ENCODE measurements at regions of chr1 and their contacts with region 1.

Region 1: DNA sequence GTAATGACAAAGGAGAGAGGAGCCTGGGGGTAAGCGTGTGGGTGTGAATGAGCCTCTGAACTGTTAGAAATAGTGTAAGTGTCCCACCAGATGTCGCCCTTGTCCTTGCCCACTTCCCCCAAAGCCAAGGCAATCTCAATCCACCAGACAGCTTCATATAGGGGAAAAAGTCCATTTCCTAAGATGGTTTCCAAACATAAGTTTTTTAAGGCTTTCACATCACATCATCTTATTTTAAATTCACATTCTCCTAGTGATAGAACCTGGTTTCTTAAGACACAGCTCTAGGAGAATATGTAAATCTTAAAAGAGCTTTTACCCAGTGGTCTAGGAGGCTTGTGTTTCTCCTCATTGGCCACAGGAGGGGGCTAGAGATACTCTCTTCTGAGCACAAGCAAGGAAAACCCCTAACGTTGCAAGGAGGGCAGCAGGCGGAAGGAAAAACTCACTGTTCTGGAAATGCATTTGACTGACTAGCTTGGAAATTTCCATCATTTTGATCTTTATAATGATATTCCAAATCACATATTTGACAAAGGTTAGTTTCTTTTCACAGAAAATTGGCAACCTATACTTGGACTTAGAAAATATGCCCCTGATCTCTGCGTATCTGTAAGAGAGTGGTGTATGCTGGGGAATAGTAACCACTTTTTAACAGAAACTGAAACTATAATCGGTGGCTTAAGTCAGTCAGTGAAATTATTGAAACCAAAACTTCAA is 51.9 kb upstream of the LPAR3 start:
- DNase-seq: peak; percentile 41 to 96 (median 60)
- ATAC-seq: peak; percentile 95
- H3K4me3 ChIP-seq: peak overlapping the region; percentile 55
- H3K4me3 Mint-ChIP-seq: peak overlapping the region; percentile 89
- H3K27ac ChIP-seq: peak overlapping the region; percentile 80 to 89
- H3K27ac Mint-ChIP-seq: peak overlapping the region; percentile 98
- H3K4me1 ChIP-seq: peaks cover 12% of the 10 kb centered on the region
- H3K4me1 Mint-ChIP-seq: peaks cover 15% of the 10 kb centered on the region
- H3K27me3 ChIP-seq: no peaks in the 10 kb centered on the region
- H3K27me3 Mint-ChIP-seq: no peaks in the 10 kb centered on the region
- CTCF ChIP-seq: peak; percentile 98

Region 2: DNA sequence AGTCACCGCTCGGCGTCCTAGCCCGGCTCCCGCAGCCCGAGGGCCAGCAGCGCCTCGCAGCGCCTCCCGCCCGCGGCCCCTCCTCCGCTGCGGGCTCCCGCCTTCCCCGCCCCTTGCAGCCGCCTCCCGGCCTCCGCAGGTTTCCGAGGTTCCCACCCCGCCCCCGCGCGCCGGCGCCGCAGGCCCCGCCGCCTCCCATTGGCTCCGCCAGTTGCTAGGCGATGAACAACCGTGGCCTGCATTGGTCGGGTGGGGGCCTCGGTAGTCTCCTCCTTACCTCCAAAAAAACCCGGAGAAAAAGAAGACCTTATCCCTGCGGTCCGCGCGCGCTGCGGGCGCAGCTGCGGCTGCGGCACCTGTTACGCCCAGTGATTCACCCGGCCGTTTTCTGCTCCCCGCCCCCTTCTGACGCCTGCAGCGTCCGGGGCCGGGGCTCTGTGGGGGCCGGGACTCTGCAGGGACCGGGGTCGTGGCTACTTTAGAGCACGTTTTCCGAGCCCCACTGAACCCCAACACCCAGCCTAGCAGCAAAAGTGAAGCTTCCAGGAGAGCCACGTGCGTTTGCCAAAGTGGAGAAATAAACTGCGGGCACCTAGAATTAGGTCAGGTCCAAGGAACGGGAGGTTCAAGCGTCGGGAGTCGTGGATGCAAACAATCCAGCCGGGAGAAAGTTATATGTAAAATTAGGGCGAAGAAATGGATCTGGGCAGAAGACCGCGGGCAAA is 254.4 kb before region 1 on chr1 and contains the start of gene SSX2IP:
- CTCF ChIA-PET with region 1: interaction called, 3 read pairs
- POLR2A ChIA-PET with region 1: interaction called, 3 read pairs
- intact Hi-C with region 1: loop called in 1 of 2 experiments (anchors 2 kb)
- DNase-seq: peak; percentile 99 to 100 (median 100)
- ATAC-seq: peak; percentile 82
- H3K4me3 ChIP-seq: peak within 1 kb of the TSS; percentile 84
- H3K4me3 Mint-ChIP-seq: peak within 1 kb of the TSS; percentile 91
- H3K27ac ChIP-seq: peak within 1 kb of the TSS; percentile 76 to 83
- H3K27ac Mint-ChIP-seq: peak within 1 kb of the TSS; percentile 88
- H3K4me1 ChIP-seq: peaks cover 29% of the 10 kb centered on the region
- H3K4me1 Mint-ChIP-seq: peaks cover 77% of the 10 kb centered on the region
- H3K27me3 ChIP-seq: no peaks in the 10 kb centered on the region
- H3K27me3 Mint-ChIP-seq: no peaks in the 10 kb centered on the region
- CTCF ChIP-seq: no peak
- total RNA-seq, gene SSX2IP: 5.5 to 6.0 TPM

Region 3: GRCh38 chr1:84996846-84997666 is 52.1 kb after region 1 on chr1 and contains the start of gene MCOLN2:
- CTCF ChIA-PET with region 1: interaction called, 7 read pairs
- POLR2A ChIA-PET with region 1: interaction called, 4 read pairs
- intact Hi-C with region 1: loop called (anchors 2 to 5 kb)
- DNase-seq: peak in 13 of 14 experiments; percentile 7 to 78 (median 52)
- ATAC-seq: peak; percentile 74
- H3K4me3 ChIP-seq: peak within 1 kb of the TSS; percentile 79
- H3K4me3 Mint-ChIP-seq: peak within 1 kb of the TSS; percentile 92
- H3K27ac ChIP-seq: peak within 1 kb of the TSS in 1 of 2 donors; percentile 33
- H3K27ac Mint-ChIP-seq: peak within 1 kb of the TSS; percentile 18
- H3K4me1 ChIP-seq: peaks cover 30% of the 10 kb centered on the region
- H3K4me1 Mint-ChIP-seq: peaks cover 32% of the 10 kb centered on the region
- H3K27me3 ChIP-seq: peaks cover 8 to 36% of the 10 kb centered on the region in 2 experiments
- H3K27me3 Mint-ChIP-seq: peaks cover 55% of the 10 kb centered on the region
- CTCF ChIP-seq: no peak
- total RNA-seq, gene MCOLN2: 9.7 TPM

Region 4: DNA sequence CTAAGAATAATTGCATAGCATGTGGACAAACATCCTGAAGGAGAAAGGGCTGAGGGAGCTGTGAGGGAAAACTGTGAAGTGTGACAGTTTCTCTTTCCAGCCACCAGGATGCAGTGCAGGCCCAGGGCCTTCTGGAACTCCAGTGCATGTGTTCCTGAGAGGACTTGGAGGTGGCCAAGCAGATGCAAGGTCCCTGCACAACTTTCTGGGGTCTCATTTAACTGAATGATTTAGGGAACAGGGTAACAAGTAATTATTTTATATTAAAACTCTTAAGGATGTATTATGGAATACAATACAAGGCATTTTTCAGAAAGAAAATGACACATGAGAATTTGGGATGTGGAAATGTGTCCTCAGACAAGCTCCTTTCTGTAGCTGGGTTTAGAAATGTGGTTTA is 164.5 kb after region 1 on chr1:
- CTCF ChIA-PET with region 1: interaction called, 4 read pairs
- POLR2A ChIA-PET with region 1: no interaction called
- intact Hi-C with region 1: loop called in 1 of 2 experiments (anchors 5 kb)
- DNase-seq: peak in 13 of 14 experiments; percentile 14 to 73 (median 39)
- ATAC-seq: peak; percentile 83
- H3K4me3 ChIP-seq: no peak overlapping the region
- H3K4me3 Mint-ChIP-seq: no peak overlapping the region
- H3K27ac ChIP-seq: no peak overlapping the region
- H3K27ac Mint-ChIP-seq: no peak overlapping the region
- H3K4me1 ChIP-seq: no peaks in the 10 kb centered on the region
- H3K4me1 Mint-ChIP-seq: no peaks in the 10 kb centered on the region
- H3K27me3 ChIP-seq: no peaks in the 10 kb centered on the region
- H3K27me3 Mint-ChIP-seq: peaks cover 6% of the 10 kb centered on the region
- CTCF ChIP-seq: peak; percentile 54

Region 5: DNA sequence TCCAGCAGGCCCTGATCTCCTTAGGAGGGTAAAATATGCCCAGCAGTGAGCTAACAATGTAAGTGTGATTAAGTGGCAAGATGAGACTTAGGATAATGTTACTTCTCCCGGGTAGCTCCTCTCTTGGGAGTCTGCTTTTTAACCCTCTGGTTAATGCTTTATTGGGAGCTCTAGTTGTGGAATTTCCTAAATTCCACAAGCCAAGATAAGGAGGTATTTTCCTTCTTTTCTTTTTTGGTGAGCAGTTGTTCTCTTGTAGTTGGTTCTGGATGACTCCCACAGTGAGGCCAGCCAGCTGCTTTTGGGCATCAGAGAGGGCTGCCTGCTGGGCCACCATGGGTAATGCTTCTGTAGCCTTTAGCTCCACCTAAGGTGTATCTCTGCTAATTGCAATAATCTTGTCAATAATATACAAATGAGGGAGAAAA is 295.3 kb after region 1 on chr1:
- CTCF ChIA-PET with region 1: interaction called, 11 read pairs
- POLR2A ChIA-PET with region 1: interaction called, 3 read pairs
- intact Hi-C with region 1: no loop called
- DNase-seq: peak in 5 of 14 experiments; percentile 5 to 51 (median 36)
- ATAC-seq: peak; percentile 46
- H3K4me3 ChIP-seq: no peak overlapping the region
- H3K4me3 Mint-ChIP-seq: no peak overlapping the region
- H3K27ac ChIP-seq: no peak overlapping the region
- H3K27ac Mint-ChIP-seq: peak overlapping the region; percentile 55
- H3K4me1 ChIP-seq: no peaks in the 10 kb centered on the region
- H3K4me1 Mint-ChIP-seq: peaks cover 17% of the 10 kb centered on the region
- H3K27me3 ChIP-seq: peaks cover 0 to 3% of the 10 kb centered on the region in 2 experiments
- H3K27me3 Mint-ChIP-seq: peaks cover 5% of the 10 kb centered on the region
- CTCF ChIP-seq: peak; percentile 18

Region 6: DNA sequence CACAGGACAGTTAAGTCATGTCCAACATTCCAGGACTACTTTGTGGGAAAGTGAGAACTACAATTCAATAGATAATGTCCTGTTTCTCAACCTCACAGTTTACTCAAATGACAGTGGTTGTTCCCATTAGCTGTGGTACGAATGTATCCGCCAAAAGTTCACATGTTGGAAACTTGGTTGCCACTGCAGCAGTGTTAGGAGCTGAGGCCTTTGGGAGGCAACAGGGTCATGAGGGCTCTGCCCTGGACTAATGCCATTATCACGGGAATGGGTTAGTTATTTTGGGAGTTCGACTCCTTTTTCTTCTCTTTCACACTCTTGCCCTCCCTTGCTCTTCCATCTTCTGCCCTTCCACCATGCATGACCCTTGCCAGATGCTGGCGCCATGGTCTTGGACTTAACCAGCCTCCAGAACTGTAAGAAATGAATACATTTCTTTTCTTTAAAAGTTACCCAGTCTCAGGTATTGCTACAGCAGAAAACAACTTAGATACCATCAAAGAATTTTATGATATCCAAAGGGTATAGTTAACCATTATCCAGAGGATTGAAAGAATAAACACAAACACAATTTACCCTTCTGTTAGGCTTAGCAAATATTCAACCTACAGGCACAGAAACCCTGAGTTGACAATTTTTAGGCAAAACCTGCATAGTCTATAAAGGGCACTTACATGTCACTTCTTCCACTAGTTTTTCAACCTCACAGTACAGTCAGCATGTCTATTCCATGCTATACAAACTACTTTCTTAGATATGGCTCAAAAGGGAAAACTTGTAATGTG is 324.1 kb after region 1 on chr1:
- CTCF ChIA-PET with region 1: interaction called, 16 read pairs
- POLR2A ChIA-PET with region 1: interaction called, 3 read pairs
- intact Hi-C with region 1: no loop called
- DNase-seq: no peak
- ATAC-seq: no peak
- H3K4me3 ChIP-seq: no peak overlapping the region
- H3K4me3 Mint-ChIP-seq: no peak overlapping the region
- H3K27ac ChIP-seq: no peak overlapping the region
- H3K27ac Mint-ChIP-seq: no peak overlapping the region
- H3K4me1 ChIP-seq: peaks cover 3% of the 10 kb centered on the region
- H3K4me1 Mint-ChIP-seq: peaks cover 38% of the 10 kb centered on the region
- H3K27me3 ChIP-seq: no peaks in the 10 kb centered on the region
- H3K27me3 Mint-ChIP-seq: no peaks in the 10 kb centered on the region
- CTCF ChIP-seq: no peak

Region 7: GRCh38 chr1:85297855-85298629 is 353.1 kb after region 1 on chr1:
- CTCF ChIA-PET with region 1: no interaction called
- POLR2A ChIA-PET with region 1: no interaction called
- intact Hi-C with region 1: no loop called
- DNase-seq: peak in 11 of 14 experiments; percentile 16 to 81 (median 31)
- ATAC-seq: peak; percentile 87
- H3K4me3 ChIP-seq: no peak overlapping the region
- H3K4me3 Mint-ChIP-seq: no peak overlapping the region
- H3K27ac ChIP-seq: no peak overlapping the region
- H3K27ac Mint-ChIP-seq: peak overlapping the region; percentile 19
- H3K4me1 ChIP-seq: peaks cover 13% of the 10 kb centered on the region
- H3K4me1 Mint-ChIP-seq: peaks cover 10% of the 10 kb centered on the region
- H3K27me3 ChIP-seq: no peaks in the 10 kb centered on the region
- H3K27me3 Mint-ChIP-seq: no peaks in the 10 kb centered on the region
- CTCF ChIP-seq: no peak

Region 8: DNA sequence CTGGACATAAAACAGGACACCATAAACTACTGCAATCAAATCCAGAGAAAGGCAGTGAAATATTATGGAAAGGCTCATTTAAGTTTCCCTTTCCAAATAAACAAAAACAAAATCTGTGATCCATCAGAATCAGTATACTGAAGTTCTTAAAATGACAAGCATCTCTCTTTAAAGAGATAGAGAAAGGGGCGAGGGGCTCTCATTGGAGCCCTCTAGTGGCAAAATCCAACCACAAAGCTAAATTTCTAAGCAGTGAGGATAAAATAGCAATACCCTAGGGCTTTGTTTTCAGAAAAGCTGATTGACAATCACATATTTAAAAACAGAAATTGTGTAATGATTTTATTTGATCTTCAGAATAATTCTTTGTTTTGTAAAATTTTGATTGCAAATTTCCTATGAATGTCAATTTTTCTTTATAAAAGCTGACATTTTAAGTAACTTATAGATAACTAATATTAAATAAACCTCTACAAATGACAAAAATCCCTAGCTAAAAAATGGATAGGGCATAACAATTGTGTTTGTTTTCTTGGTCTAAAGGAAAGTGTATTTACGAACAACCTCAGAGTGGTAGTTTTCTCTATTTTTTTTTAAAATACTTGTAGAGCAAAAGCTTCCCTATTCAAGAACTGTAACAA is 1073.5 kb after region 1 on chr1:
- CTCF ChIA-PET with region 1: no interaction called
- POLR2A ChIA-PET with region 1: no interaction called
- intact Hi-C with region 1: loop called in 1 of 2 experiments (anchors 5 kb)
- DNase-seq: peak in 3 of 14 experiments; percentile 15 to 28 (median 17)
- ATAC-seq: no peak
- H3K4me3 ChIP-seq: no peak overlapping the region
- H3K4me3 Mint-ChIP-seq: no peak overlapping the region
- H3K27ac ChIP-seq: no peak overlapping the region
- H3K27ac Mint-ChIP-seq: no peak overlapping the region
- H3K4me1 ChIP-seq: no peaks in the 10 kb centered on the region
- H3K4me1 Mint-ChIP-seq: no peaks in the 10 kb centered on the region
- H3K27me3 ChIP-seq: no peaks in the 10 kb centered on the region
- H3K27me3 Mint-ChIP-seq: no peaks in the 10 kb centered on the region
- CTCF ChIP-seq: peak; percentile 66

Measured in CD4-positive, alpha-beta T cell (primary cell).